Activated CD4-positive, alpha-beta memory T cell treated with anti-CD3 and anti-CD28 coated beads for 36 hours (primary cell): ENCODE measurements at regions of chr22 and their contacts with region 1.

Region 1: DNA sequence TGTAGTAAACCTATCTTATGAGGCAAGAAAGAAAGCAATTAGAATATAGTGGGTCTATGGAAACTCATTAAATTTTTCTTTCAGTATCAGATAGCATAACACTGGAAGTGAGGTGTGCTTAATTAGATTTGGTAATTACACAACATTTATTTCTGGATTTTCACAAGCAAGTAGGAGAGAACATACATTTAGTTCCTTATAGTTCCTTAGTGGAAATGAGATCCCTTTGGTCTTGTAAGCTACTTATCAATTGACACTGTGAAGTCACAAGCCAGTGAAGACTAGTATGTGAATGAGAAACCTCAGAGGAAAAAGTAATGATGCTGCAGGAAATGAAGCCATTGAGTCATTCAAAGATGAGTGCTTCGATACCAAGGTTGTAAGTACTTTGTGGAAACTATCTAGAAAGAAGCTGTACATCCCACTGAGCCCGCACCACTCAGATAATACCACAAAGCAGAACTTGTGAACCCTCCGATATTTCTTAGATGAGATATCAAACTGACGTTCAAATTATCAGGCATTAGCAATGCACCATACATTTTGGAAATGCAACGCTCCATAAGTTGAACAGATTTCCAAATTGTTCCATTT is 53.5 kb downstream of the ENTHD1 start:
- DNase-seq: peak; percentile 63
- H3K4me3 Mint-ChIP-seq: no peak overlapping the region
- H3K27ac Mint-ChIP-seq: no peak overlapping the region
- H3K4me1 Mint-ChIP-seq: peaks cover 14% of the 10 kb centered on the region
- H3K27me3 Mint-ChIP-seq: no peaks in the 10 kb centered on the region

Region 2: GRCh38 chr22:39908737-39909136 is 68.7 kb after region 1 on chr22:
- CTCF ChIA-PET with region 1: no interaction called
- POLR2A ChIA-PET with region 1: interaction called, 5 read pairs
- intact Hi-C with region 1: loop called (anchors 1 kb)
- DNase-seq: peak; percentile 69
- H3K4me3 Mint-ChIP-seq: peak overlapping the region; percentile 83
- H3K27ac Mint-ChIP-seq: peak overlapping the region; percentile 93
- H3K4me1 Mint-ChIP-seq: peaks cover 58% of the 10 kb centered on the region
- H3K27me3 Mint-ChIP-seq: no peaks in the 10 kb centered on the region